Activated T-helper 1 cell treated with anti-CD3 and anti-CD28 coated beads, Interleukin-12 subunit alpha, Interleukin-12 subunit beta, Interleukin-2, Interleukin-4 antibody, amounts not matched to agents 30 ng/mL and 10 ng/mL and 1 ng/mL, durations not matched to agents 14 hours and 24 hours and 36 hours (primary cell): ENCODE measurements at regions of chr5 and their contacts with region 1.

Region 1: GRCh38 chr5:140107312-140108083 is 6.4 kb upstream of the PURA start:
- DNase-seq: peak; percentile 90
- H3K4me3 Mint-ChIP-seq: peak overlapping the region; percentile 90
- H3K27ac Mint-ChIP-seq: peak overlapping the region; percentile 93
- H3K4me1 Mint-ChIP-seq: peaks cover 41% of the 10 kb centered on the region
- H3K27me3 Mint-ChIP-seq: peaks cover 60% of the 10 kb centered on the region

Region 2: GRCh38 chr5:139341650-139342422 is 765.7 kb before region 1 on chr5 and contains the start of gene PAIP2:
- intact Hi-C with region 1: loop called (anchors 5 kb)
- DNase-seq: peak; percentile 95
- H3K4me3 Mint-ChIP-seq: peak within 1 kb of the TSS; percentile 94
- H3K27ac Mint-ChIP-seq: peak within 1 kb of the TSS; percentile 95
- H3K4me1 Mint-ChIP-seq: peaks cover 46% of the 10 kb centered on the region
- H3K27me3 Mint-ChIP-seq: no peaks in the 10 kb centered on the region
- total RNA-seq, gene PAIP2: 88.4 and 97.3 TPM in 2 replicates

Region 3: DNA sequence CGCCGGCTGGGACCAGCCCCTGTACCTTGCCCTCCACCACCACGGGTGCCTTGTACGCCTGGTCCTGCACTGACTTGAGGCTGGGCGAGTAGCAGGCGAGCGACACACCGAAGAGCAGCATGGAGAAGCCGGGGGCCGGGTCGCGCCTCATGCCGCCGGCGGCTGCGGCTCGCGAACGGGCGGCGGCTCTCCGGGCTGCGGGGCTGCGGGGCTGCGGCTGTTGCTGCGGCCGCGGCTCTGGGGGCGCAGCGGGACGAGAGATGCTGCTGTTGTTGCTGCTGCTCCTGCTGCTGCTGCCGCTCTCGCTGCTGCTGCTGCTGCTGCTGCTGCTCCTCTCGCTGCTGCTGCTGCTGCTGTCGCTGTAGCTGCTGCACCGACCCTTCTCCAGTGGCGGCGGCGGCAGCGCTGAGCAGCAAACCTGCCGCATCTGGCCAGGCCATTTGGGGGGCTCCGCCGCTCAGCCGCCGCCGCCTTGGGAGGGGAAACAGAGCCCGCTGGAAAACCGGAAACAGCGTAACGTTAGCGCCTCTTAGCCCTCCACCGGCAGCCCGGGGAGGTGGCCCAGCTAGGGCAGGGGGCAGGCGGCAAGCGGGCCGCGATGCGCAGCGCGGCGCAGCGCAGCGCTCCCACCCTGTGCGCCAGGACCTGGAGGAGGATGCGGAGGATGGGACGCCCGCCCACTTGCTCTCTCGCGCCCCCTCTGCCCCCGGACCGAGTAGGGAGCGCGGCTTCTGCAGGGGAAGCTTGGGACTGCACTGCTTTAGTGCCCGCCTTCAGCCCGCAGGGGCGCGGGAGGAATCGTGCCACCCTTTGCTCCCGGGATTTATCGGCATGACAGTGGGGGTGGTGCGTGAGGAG is 64.6 kb before region 1 on chr5 and contains the start of gene NRG2:
- intact Hi-C with region 1: loop called (anchors 2 kb)
- DNase-seq: peak; percentile 11
- H3K4me3 Mint-ChIP-seq: peak within 1 kb of the TSS; percentile 69
- H3K27ac Mint-ChIP-seq: no peak within 1 kb of the TSS
- H3K4me1 Mint-ChIP-seq: peaks cover 15% of the 10 kb centered on the region
- H3K27me3 Mint-ChIP-seq: peaks cover 63% of the 10 kb centered on the region
- total RNA-seq, gene NRG2: 0.08 TPM in 1 of 2 replicates, not detected in the other

Region 4: GRCh38 chr5:140157032-140157803 is 49.7 kb after region 1 on chr5:
- intact Hi-C with region 1: loop called (anchors 1 kb)
- DNase-seq: peak; percentile 76
- H3K4me3 Mint-ChIP-seq: peak overlapping the region; percentile 41
- H3K27ac Mint-ChIP-seq: no peak overlapping the region
- H3K4me1 Mint-ChIP-seq: no peaks in the 10 kb centered on the region
- H3K27me3 Mint-ChIP-seq: peaks cover 4% of the 10 kb centered on the region

Region 5: DNA sequence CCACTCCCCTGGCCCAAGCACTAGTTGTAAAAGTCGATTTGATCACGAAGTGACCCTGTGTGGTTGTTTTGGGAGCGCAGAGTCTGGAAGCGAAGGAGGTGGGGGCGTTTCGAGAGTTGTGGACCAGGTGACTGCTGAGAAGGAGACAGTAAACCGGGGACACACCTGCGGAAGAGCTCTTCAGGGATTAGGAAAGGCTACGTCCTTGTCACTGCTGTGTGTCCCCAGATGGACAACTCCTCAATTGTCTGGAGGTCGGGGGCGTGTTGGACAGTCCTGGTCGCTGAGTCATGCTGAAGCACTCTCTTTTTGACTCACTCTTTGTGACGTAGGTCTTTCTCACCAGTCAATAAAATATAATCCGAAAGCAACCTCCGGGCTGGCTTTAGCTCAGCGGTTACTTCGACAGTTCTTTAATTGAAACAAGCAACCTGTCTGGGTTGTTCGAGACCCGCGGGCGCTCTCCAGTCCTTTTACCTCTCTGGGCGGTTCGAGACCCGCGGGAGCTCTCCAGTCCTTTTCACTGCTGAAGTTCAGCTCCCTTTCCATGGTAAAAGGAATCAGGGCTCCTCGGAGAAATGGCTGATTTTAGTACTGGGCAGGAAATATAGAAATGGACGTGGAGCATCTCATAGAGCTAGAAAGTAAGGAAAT is 603.5 kb after region 1 on chr5:
- intact Hi-C with region 1: loop called (anchors 10 kb)
- DNase-seq: peak; percentile 87
- H3K4me3 Mint-ChIP-seq: peak overlapping the region; percentile 91
- H3K27ac Mint-ChIP-seq: peak overlapping the region; percentile 94
- H3K4me1 Mint-ChIP-seq: peaks cover 22% of the 10 kb centered on the region
- H3K27me3 Mint-ChIP-seq: peaks cover 8% of the 10 kb centered on the region